ENCODE measurements at regions of chr18 and their contacts with region 1.

Region 1: DNA sequence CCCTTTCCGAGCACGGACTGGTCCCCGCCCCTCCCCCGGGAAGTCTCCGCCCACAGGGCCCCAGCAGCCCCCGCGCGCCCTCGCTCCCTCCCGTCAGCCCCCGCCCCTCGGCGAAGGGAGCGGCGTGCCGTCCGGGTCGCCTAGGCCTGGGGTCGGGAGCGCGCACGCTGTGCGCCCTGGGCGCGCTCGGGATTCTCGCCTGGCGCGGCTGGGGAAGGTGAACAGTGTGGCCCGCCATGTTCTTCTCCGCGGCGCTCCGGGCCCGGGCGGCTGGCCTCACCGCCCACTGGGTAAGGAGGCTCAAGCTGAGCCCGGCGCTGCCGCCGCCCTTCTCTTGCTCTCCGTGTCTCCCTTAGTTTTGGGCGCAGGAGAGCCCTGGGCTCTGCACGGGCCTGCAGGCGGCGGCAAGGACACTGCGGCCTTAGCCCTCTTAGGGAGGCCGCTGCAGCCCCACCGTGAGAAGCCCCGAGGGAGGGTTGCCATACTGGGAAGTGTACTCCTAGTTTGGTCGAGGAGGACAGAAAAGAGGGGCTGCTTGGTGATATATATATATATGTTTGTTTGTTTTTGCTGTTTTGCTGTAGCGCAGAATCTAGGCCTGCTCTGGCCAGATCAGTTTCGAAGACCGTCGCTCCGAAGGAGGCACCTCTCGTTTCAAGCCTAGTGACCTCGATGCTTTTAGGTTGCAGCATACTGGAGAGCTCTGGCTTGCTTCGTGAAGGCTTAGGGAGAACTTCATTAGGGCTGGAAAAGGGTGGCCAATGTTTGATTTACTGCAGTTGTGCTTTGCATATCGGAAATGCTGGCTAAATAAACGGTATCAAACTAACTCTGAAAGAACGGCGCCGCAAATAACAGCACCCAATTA is at the start of gene NDUFV2:
- DNase-seq: peak; percentile 91 to 96 (median 95)
- H3K4me3 ChIP-seq: peak within 1 kb of the TSS; percentile 66 to 95 (median 81)
- H3K4me3 Mint-ChIP-seq: peak within 1 kb of the TSS; percentile 90 to 94
- H3K27ac ChIP-seq: peak within 1 kb of the TSS; percentile 87 to 94
- H3K27ac Mint-ChIP-seq: peak within 1 kb of the TSS; percentile 93 to 99 (median 96)
- H3K4me1 ChIP-seq: peaks cover 48 to 54% of the 10 kb centered on the region in 2 donors
- H3K4me1 Mint-ChIP-seq: peaks cover 54% of the 10 kb centered on the region
- H3K27me3 ChIP-seq: no peaks in the 10 kb centered on the region
- H3K27me3 Mint-ChIP-seq: no peaks in the 10 kb centered on the region
- CTCF ChIP-seq: no peak
- polyA plus RNA-seq, gene NDUFV2: 55.4 to 184 (median 162) TPM

Region 2: GRCh38 chr18:9117980-9118841 is 15.5 kb after region 1 on chr18:
- intact Hi-C with region 1: loop called in 1 of 2 experiments (anchors 2 kb)
- DNase-seq: peak; percentile 59 to 81 (median 74)
- H3K4me3 ChIP-seq: peak overlapping the region in 1 of 3 experiments; percentile 62
- H3K4me3 Mint-ChIP-seq: peak overlapping the region in 1 of 2 donors; percentile 33
- H3K27ac ChIP-seq: peak overlapping the region in 1 of 2 donors; percentile 92
- H3K27ac Mint-ChIP-seq: peak overlapping the region; percentile 79 to 98 (median 84)
- H3K4me1 ChIP-seq: peaks cover 34 to 57% of the 10 kb centered on the region in 2 donors
- H3K4me1 Mint-ChIP-seq: peaks cover 50% of the 10 kb centered on the region
- H3K27me3 ChIP-seq: no peaks in the 10 kb centered on the region
- H3K27me3 Mint-ChIP-seq: no peaks in the 10 kb centered on the region
- CTCF ChIP-seq: no peak

Region 3: DNA sequence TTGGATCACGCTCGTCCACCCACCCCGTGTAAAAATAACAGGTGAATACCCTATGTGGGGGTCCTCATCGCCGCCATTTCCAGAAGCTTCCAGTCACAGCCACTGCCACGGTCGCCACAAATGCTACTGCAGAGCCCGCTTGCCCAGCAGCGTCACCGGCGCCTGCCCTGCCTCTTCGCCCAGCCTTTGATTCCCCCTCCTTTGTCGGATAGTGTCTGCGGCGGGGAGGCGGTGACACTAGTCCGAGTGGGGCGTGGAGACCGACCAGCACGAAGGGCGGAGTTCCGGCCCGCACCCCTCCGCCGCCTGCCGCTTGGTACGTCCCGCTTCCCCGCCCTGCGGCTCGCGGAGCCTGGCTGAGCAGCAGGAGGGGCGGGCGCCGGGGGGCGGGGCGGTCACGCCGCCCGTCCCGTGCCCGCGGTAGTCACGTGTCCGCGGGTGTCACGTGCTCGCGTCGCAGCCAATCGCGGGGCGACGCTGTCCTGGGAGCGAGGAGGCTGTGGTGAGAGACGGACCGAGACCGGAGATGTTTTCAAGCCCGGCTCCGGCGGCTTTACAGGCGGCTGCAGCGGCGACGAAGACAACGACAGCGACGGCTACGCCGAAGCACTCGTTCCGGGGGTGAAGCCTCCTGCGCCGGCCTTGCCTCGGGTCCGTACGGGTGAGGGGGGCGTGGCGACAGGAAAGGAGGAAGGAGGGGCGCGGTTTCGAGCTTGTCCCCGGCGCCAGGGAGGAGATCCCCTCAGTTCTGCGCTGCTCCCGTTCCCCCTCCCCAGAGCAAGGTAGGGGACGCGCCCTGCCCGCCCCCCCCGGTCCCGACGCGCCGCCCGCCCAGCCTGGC is 33.8 kb after region 1 on chr18 and contains the start of gene ANKRD12:
- intact Hi-C with region 1: loop called (anchors 2 to 5 kb)
- DNase-seq: peak; percentile 98 to 99 (median 98)
- H3K4me3 ChIP-seq: peak within 1 kb of the TSS; percentile 84 to 100 (median 88)
- H3K4me3 Mint-ChIP-seq: peak within 1 kb of the TSS; percentile 91 to 95
- H3K27ac ChIP-seq: peak within 1 kb of the TSS; percentile 97 to 100
- H3K27ac Mint-ChIP-seq: peak within 1 kb of the TSS; percentile 98 to 100 (median 99)
- H3K4me1 ChIP-seq: peaks cover 31 to 50% of the 10 kb centered on the region in 2 donors
- H3K4me1 Mint-ChIP-seq: peaks cover 47% of the 10 kb centered on the region
- H3K27me3 ChIP-seq: no peaks in the 10 kb centered on the region
- H3K27me3 Mint-ChIP-seq: no peaks in the 10 kb centered on the region
- CTCF ChIP-seq: no peak
- polyA plus RNA-seq, gene ANKRD12: 9.3 to 15.5 (median 15.4) TPM

Region 4: GRCh38 chr18:9474983-9475642 is 372.4 kb after region 1 on chr18 and contains the start of gene RALBP1:
- intact Hi-C with region 1: loop called in 1 of 2 experiments (anchors 10 kb)
- DNase-seq: peak; percentile 99
- H3K4me3 ChIP-seq: peak within 1 kb of the TSS; percentile 79 to 89 (median 80)
- H3K4me3 Mint-ChIP-seq: peak within 1 kb of the TSS; percentile 88 to 92
- H3K27ac ChIP-seq: peak within 1 kb of the TSS; percentile 84 to 90
- H3K27ac Mint-ChIP-seq: peak within 1 kb of the TSS; percentile 81 to 94 (median 91)
- H3K4me1 ChIP-seq: peaks cover 20 to 25% of the 10 kb centered on the region in 2 donors
- H3K4me1 Mint-ChIP-seq: peaks cover 30% of the 10 kb centered on the region
- H3K27me3 ChIP-seq: no peaks in the 10 kb centered on the region
- H3K27me3 Mint-ChIP-seq: peaks cover 0 to 2% (median 0%) of the 10 kb centered on the region in 3 donors
- CTCF ChIP-seq: no peak
- polyA plus RNA-seq, gene RALBP1: 21.5 to 36.0 (median 32.8) TPM

Measured in CD14-positive monocyte (primary cell).